AG04449 (cell line): ENCODE measurements at regions of chr1 and their contacts with region 1.

Region 1: GRCh38 chr1:224851210-224851847 is 78.1 kb upstream of the DNAH14 start:
- DNase-seq: no peak
- H3K4me3 ChIP-seq: no peak overlapping the region
- CTCF ChIP-seq: peak; percentile 79

Region 2: GRCh38 chr1:224513787-224514209 is 337.5 kb before region 1 on chr1:
- CTCF ChIA-PET with region 1: interaction called, 511 read pairs
- POLR2A ChIA-PET with region 1: no interaction called
- DNase-seq: no peak
- H3K4me3 ChIP-seq: no peak overlapping the region
- CTCF ChIP-seq: peak; percentile 97

Region 3: DNA sequence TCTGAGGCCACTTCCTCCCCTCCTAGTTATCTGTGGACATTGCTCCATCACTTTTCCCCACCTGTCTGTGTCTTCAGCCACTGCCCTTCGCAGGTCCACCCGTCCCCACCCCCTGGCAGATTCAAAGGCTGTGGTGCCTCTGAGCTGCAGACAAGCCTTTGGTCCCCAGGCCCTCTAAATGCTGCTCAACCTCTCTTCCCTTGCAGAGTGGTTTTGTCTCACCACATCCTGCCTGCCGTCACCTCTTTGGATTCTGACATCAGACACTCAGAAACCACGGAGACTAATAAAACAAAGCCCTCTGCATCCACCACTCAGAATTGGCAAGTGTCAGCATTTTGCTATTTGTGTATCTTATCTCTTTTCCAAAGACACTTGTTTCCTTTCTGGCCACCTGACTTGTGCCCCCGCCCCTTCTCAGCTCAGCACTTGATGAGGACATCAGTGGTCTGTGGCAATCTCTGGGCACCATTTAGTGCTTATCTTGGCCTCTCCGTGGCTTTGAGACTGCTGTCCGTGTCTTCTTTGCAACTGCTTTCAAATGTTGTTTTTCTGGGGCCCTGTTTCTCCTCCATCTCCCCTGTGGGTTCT is 227.5 kb before region 1 on chr1:
- CTCF ChIA-PET with region 1: interaction called, 23 read pairs
- POLR2A ChIA-PET with region 1: no interaction called
- DNase-seq: peak; percentile 58
- H3K4me3 ChIP-seq: no peak overlapping the region; the same call in 1 of the 2 replicates
- CTCF ChIP-seq: no peak

Region 4: GRCh38 chr1:224687465-224687864 is 163.9 kb before region 1 on chr1:
- CTCF ChIA-PET with region 1: interaction called, 12 read pairs
- POLR2A ChIA-PET with region 1: no interaction called
- DNase-seq: no peak
- H3K4me3 ChIP-seq: no peak overlapping the region
- CTCF ChIP-seq: no peak

Region 5: GRCh38 chr1:224809613-224810012 is 41.7 kb before region 1 on chr1:
- CTCF ChIA-PET with region 1: interaction called, 12 read pairs
- POLR2A ChIA-PET with region 1: no interaction called
- DNase-seq: no peak
- H3K4me3 ChIP-seq: no peak overlapping the region
- CTCF ChIP-seq: no peak

Region 6: GRCh38 chr1:224879162-224879803 is 28.0 kb after region 1 on chr1:
- CTCF ChIA-PET with region 1: interaction called, 50 read pairs
- POLR2A ChIA-PET with region 1: no interaction called
- DNase-seq: no peak
- H3K4me3 ChIP-seq: no peak overlapping the region
- CTCF ChIP-seq: no peak

Region 7: DNA sequence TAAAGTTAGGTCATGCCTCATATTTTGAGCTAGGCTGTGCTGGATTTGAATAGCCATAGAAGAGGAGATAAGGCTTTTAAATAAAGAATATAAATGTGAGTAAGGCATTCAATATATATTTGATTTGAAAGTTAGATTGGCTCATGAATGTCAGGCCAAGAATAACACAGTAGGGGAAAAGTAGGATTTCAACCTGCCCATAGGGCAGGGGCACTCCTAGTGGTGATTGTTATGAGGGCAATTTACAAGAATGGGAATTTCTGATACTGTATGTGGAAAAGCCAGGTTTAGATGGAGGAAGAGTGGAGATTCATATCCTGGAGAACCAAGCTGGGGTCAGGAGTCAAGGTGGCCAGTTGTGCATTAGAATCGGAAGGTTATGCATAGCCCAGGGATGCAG is 153.1 kb after region 1 on chr1:
- CTCF ChIA-PET with region 1: no interaction called
- POLR2A ChIA-PET with region 1: no interaction called
- DNase-seq: no peak
- H3K4me3 ChIP-seq: no peak overlapping the region
- CTCF ChIP-seq: no peak

Region 8: DNA sequence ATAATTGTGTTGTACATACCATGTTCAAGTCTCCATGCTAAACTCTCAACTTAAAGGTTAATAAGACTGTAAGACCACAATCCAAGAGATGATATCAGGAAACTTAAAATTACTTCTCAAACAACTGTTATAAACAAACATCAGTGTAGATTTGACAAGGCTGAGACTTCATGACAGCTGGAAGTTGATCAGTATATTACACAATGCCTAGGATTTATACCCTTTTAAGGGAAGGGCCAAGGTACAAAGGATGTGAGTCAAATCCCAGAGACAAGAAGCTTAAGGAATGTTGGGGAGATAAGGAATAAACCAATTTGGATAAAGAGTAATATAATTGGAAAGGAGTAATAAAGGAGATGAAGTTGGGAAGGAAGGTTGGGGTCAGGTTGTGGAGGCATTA is 477.7 kb after region 1 on chr1:
- CTCF ChIA-PET with region 1: no interaction called
- POLR2A ChIA-PET with region 1: no interaction called
- DNase-seq: no peak
- H3K4me3 ChIP-seq: no peak overlapping the region
- CTCF ChIP-seq: no peak